ENCODE measurements at regions of chr10 and their contacts with region 1.

Region 1: DNA sequence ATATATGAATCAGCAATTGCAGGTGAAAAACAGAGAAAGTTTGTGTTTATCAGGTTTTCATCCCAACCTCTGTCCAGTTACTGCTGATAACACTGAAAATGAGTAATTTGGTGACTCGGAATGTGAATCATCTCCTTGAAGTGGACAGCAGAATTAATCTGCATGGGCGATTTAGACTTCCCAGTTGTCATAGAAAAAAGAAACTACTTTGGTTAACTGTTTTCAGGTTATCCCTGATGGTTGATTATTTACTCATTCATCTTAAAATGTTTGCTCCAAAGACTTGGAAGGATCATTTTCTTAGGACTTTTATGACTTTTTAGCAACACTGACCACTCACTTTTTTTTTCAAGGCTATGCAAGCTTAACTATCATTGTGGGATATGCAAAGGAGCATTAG is 504.1 kb upstream of the ANKRD30A start:
- DNase-seq: no peak
- ATAC-seq: no peak
- H3K4me3 ChIP-seq: no peak overlapping the region
- H3K27ac ChIP-seq: no peak overlapping the region
- H3K4me1 ChIP-seq: no peaks in the 10 kb centered on the region
- H3K27me3 ChIP-seq: no peaks in the 10 kb centered on the region
- CTCF ChIP-seq: no peak
- EP300 ChIP-seq: no peak
- POLR2A ChIP-seq: no peak
- RAD21 ChIP-seq: no peak

Region 2: GRCh38 chr10:36574207-36574606 is 47.1 kb before region 1 on chr10:
- CTCF ChIA-PET with region 1: no interaction called
- POLR2A ChIA-PET with region 1: no interaction called
- in situ Hi-C with region 1: no loop called
- intact Hi-C with region 1: loop called (anchors 1 kb)
- DNase-seq: no peak
- ATAC-seq: no peak
- H3K4me3 ChIP-seq: no peak overlapping the region
- H3K27ac ChIP-seq: no peak overlapping the region
- H3K4me1 ChIP-seq: no peaks in the 10 kb centered on the region
- H3K27me3 ChIP-seq: no peaks in the 10 kb centered on the region
- CTCF ChIP-seq: no peak
- EP300 ChIP-seq: no peak
- POLR2A ChIP-seq: no peak
- RAD21 ChIP-seq: no peak

Region 3: DNA sequence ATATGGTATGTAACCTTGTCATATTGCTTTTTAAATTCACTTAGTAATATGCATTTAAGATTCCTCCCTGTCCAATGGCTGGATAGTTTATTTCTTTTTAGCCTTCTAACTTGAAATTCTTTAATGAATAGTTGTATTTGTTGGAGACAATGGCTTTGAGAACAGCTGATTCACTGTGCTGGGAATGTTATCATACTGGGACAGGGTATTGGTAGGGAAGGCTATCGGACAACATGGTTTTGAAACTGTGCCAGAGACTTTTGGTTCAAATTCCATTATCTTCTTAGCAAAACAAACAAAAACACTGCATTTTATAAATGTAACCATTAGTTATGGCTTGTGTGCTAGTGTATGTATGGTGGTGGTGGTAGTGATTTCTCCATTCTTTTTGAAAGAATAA is 13.1 kb before region 1 on chr10:
- CTCF ChIA-PET with region 1: no interaction called
- POLR2A ChIA-PET with region 1: no interaction called
- in situ Hi-C with region 1: no loop called
- intact Hi-C with region 1: no loop called
- DNase-seq: peak; percentile 1
- ATAC-seq: no peak
- H3K4me3 ChIP-seq: no peak overlapping the region
- H3K27ac ChIP-seq: no peak overlapping the region
- H3K4me1 ChIP-seq: no peaks in the 10 kb centered on the region
- H3K27me3 ChIP-seq: no peaks in the 10 kb centered on the region
- CTCF ChIP-seq: no peak
- EP300 ChIP-seq: no peak
- POLR2A ChIP-seq: no peak
- RAD21 ChIP-seq: no peak

Region 4: DNA sequence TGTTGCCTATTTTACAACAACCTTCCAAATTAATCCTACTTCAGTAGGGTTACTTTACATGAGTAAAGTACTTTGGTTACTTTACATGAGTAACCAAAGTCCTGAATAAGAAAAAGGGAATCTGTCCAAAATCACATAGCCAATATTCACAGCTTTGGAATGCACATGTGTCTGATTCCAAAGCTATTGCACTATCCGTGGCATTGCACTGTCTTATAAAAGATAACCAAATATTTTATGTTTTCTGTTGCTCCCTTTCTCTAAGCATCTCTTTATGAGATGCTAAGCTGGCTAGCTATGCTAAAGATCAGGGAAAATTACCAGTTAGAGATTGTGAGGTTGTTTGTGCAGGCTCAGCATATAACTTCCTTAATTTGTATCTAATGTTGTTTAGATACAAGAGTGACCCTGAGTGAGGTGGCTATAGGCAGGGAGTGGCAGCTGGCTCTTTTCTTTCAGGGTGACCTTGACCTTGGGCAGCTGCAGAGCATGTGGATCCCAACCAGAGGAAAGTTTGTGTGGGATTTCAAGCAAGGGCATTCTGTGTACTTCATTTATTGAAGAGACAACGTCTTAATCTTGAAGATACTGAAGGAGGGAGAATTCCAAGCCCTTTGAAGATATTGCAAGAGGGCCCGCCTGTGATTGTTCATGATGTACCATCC is 137.9 kb after region 1 on chr10:
- CTCF ChIA-PET with region 1: no interaction called
- POLR2A ChIA-PET with region 1: no interaction called
- in situ Hi-C with region 1: no loop called
- intact Hi-C with region 1: no loop called
- DNase-seq: no peak
- ATAC-seq: no peak
- H3K4me3 ChIP-seq: no peak overlapping the region
- H3K27ac ChIP-seq: no peak overlapping the region
- H3K4me1 ChIP-seq: no peaks in the 10 kb centered on the region
- H3K27me3 ChIP-seq: no peaks in the 10 kb centered on the region
- CTCF ChIP-seq: no peak
- EP300 ChIP-seq: no peak
- POLR2A ChIP-seq: no peak
- RAD21 ChIP-seq: no peak

Measured in HepG2 (cell line).